H1 (cell line): ENCODE measurements at regions of chr16 and their contacts with region 1.

Region 1: GRCh38 chr16:50338371-50339231 is 30.2 kb downstream of the BRD7 start:
- DNase-seq: no peak
- H3K4me3 ChIP-seq: no peak overlapping the region
- H3K27ac ChIP-seq: no peak overlapping the region
- H3K4me1 ChIP-seq: no peaks in the 10 kb centered on the region
- H3K27me3 ChIP-seq: no peaks in the 10 kb centered on the region
- CTCF ChIP-seq: no peak
- EP300 ChIP-seq: no peak
- POLR2A ChIP-seq: no peak
- RAD21 ChIP-seq: no peak

Region 2: GRCh38 chr16:50354629-50355456 is 16.2 kb after region 1 on chr16:
- CTCF ChIA-PET with region 1: interaction called, 19 read pairs
- POLR2A ChIA-PET with region 1: no interaction called
- DNase-seq: no peak
- H3K4me3 ChIP-seq: no peak overlapping the region
- H3K27ac ChIP-seq: no peak overlapping the region
- H3K4me1 ChIP-seq: no peaks in the 10 kb centered on the region
- H3K27me3 ChIP-seq: no peaks in the 10 kb centered on the region
- CTCF ChIP-seq: peak in 1 of 3 experiments; percentile 22; a peak in 2 of 4 replicates
- EP300 ChIP-seq: no peak
- POLR2A ChIP-seq: no peak
- RAD21 ChIP-seq: peak in 1 of 2 experiments; percentile 34; a peak in 3 of 4 replicates